Naive thymus-derived CD4-positive, alpha-beta T cell (primary cell): ENCODE measurements at regions of chr10 and their contacts with region 1.

Region 1: GRCh38 chr10:23516530-23516929 is 77.7 kb downstream of the OTUD1 start:
- DNase-seq: peak in 5 of 9 donors; percentile 17 to 50 (median 40)
- ATAC-seq: no peak
- H3K4me3 ChIP-seq: no peak overlapping the region
- H3K4me3 Mint-ChIP-seq: no peak overlapping the region
- H3K27ac ChIP-seq: no peak overlapping the region
- H3K27ac Mint-ChIP-seq: no peak overlapping the region
- H3K4me1 ChIP-seq: no peaks in the 10 kb centered on the region
- H3K4me1 Mint-ChIP-seq: peaks cover 0 to 17% (median 0%) of the 10 kb centered on the region in 7 donors
- H3K27me3 ChIP-seq: no peaks in the 10 kb centered on the region
- H3K27me3 Mint-ChIP-seq: peaks cover 9 to 23% (median 18%) of the 10 kb centered on the region in 5 donors

Region 2: GRCh38 chr10:23656735-23657134 is 140.2 kb after region 1 on chr10:
- CTCF ChIA-PET with region 1: interaction called, 5 read pairs
- POLR2A ChIA-PET with region 1: no interaction called
- intact Hi-C with region 1: loop called (anchors 1 to 10 kb)
- DNase-seq: peak in 5 of 9 donors; percentile 4 to 40 (median 37)
- ATAC-seq: no peak
- H3K4me3 ChIP-seq: no peak overlapping the region
- H3K4me3 Mint-ChIP-seq: no peak overlapping the region
- H3K27ac ChIP-seq: no peak overlapping the region
- H3K27ac Mint-ChIP-seq: peak overlapping the region in 1 of 9 donors; percentile 16
- H3K4me1 ChIP-seq: no peaks in the 10 kb centered on the region
- H3K4me1 Mint-ChIP-seq: peaks cover 0 to 2% (median 0%) of the 10 kb centered on the region in 7 donors
- H3K27me3 ChIP-seq: no peaks in the 10 kb centered on the region
- H3K27me3 Mint-ChIP-seq: peaks cover 0 to 14% (median 9%) of the 10 kb centered on the region in 5 donors

Region 3: DNA sequence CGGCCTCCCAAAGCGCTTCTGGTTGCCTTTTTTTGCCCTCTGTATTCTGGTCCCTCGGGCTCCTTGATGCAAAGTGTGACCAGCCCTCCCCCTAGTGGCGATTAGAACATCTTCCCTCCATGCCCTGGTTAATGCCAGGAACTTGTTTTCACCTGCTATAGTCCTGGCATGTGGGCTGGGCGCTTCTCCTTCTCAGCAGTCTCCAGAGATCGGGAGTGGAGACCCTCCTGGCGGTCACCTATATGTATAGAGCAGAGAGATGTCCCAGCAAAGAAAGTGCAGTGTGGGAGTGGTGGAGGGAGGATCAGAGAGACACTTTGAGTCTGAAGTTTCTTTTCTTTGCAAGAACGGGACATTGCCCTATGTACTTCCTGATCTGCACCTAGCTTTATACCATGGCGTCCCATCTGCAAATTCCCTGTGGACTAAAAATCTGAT is 186.5 kb after region 1 on chr10:
- CTCF ChIA-PET with region 1: interaction called, 3 read pairs
- POLR2A ChIA-PET with region 1: no interaction called
- intact Hi-C with region 1: loop called (anchors 1 to 2 kb)
- DNase-seq: peak in 7 of 9 donors; percentile 39 to 68 (median 61)
- ATAC-seq: peak; percentile 78
- H3K4me3 ChIP-seq: no peak overlapping the region
- H3K4me3 Mint-ChIP-seq: peak overlapping the region in 8 of 10 donors; percentile 7 to 62 (median 50)
- H3K27ac ChIP-seq: no peak overlapping the region
- H3K27ac Mint-ChIP-seq: peak overlapping the region in 1 of 9 donors; percentile 47
- H3K4me1 ChIP-seq: no peaks in the 10 kb centered on the region
- H3K4me1 Mint-ChIP-seq: peaks cover 3 to 15% (median 12%) of the 10 kb centered on the region in 7 donors
- H3K27me3 ChIP-seq: peaks cover 0 to 4% of the 10 kb centered on the region in 2 donors
- H3K27me3 Mint-ChIP-seq: peaks cover 22 to 40% (median 26%) of the 10 kb centered on the region in 5 donors

Region 4: GRCh38 chr10:24008164-24009091 is 491.9 kb after region 1 on chr10:
- CTCF ChIA-PET with region 1: no interaction called
- POLR2A ChIA-PET with region 1: no interaction called
- intact Hi-C with region 1: no loop called
- DNase-seq: no peak
- ATAC-seq: no peak
- H3K4me3 ChIP-seq: no peak overlapping the region
- H3K4me3 Mint-ChIP-seq: no peak overlapping the region
- H3K27ac ChIP-seq: no peak overlapping the region
- H3K27ac Mint-ChIP-seq: no peak overlapping the region
- H3K4me1 ChIP-seq: no peaks in the 10 kb centered on the region
- H3K4me1 Mint-ChIP-seq: no peaks in the 10 kb centered on the region
- H3K27me3 ChIP-seq: no peaks in the 10 kb centered on the region
- H3K27me3 Mint-ChIP-seq: peaks cover 0 to 28% (median 10%) of the 10 kb centered on the region in 5 donors

Region 5: GRCh38 chr10:24299578-24300260 is 783.2 kb after region 1 on chr10:
- CTCF ChIA-PET with region 1: no interaction called
- POLR2A ChIA-PET with region 1: no interaction called
- intact Hi-C with region 1: no loop called
- DNase-seq: no peak
- ATAC-seq: no peak
- H3K4me3 ChIP-seq: no peak overlapping the region
- H3K4me3 Mint-ChIP-seq: no peak overlapping the region
- H3K27ac ChIP-seq: no peak overlapping the region
- H3K27ac Mint-ChIP-seq: no peak overlapping the region
- H3K4me1 ChIP-seq: no peaks in the 10 kb centered on the region
- H3K4me1 Mint-ChIP-seq: no peaks in the 10 kb centered on the region
- H3K27me3 ChIP-seq: no peaks in the 10 kb centered on the region
- H3K27me3 Mint-ChIP-seq: peaks cover 0 to 15% (median 3%) of the 10 kb centered on the region in 5 donors